ENCODE measurements at regions of chr7 and their contacts with region 1.

Region 1: GRCh38 chr7:17144322-17144721 is 154.1 kb upstream of the AHR start:
- DNase-seq: peak; percentile 87
- H3K4me3 Mint-ChIP-seq: peak overlapping the region; percentile 54
- H3K27ac Mint-ChIP-seq: peak overlapping the region; percentile 81
- H3K4me1 Mint-ChIP-seq: peaks cover 49% of the 10 kb centered on the region
- H3K27me3 Mint-ChIP-seq: peaks cover 2% of the 10 kb centered on the region

Region 2: GRCh38 chr7:16645593-16646471 is 498.5 kb before region 1 on chr7 and contains the starts of genes ANKMY2 and BZW2:
- intact Hi-C with region 1: loop called (anchors 10 kb)
- DNase-seq: peak; percentile 98
- H3K4me3 Mint-ChIP-seq: peak within 1 kb of the TSS; percentile 93
- H3K27ac Mint-ChIP-seq: peak within 1 kb of the TSS; percentile 99
- H3K4me1 Mint-ChIP-seq: peaks cover 54% of the 10 kb centered on the region
- H3K27me3 Mint-ChIP-seq: no peaks in the 10 kb centered on the region
- total RNA-seq, gene ANKMY2: 8.0 and 8.7 TPM in 2 replicates
- total RNA-seq, gene BZW2: 104 and 113 TPM in 2 replicates

Region 3: DNA sequence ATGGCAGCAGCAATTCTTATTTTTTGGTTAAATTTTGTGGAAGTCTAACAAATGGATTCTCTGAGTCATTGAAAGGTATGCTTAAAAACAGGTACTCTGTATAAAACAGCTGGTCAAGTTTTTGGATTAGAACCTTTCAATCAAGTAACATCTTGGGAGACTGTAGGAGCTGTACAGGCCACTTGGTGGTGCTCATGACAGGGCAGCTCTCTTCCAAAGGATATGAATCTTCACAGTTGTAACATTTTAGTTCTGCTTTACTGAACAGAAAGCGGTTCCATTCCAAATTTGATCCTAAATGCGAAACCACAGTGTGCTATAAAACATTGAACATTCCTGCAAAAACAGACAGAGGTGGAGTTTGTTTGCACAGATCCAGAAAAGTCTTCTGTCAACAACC is 218.0 kb before region 1 on chr7:
- intact Hi-C with region 1: loop called (anchors 5 kb)
- DNase-seq: peak; percentile 72
- H3K4me3 Mint-ChIP-seq: no peak overlapping the region
- H3K27ac Mint-ChIP-seq: peak overlapping the region; percentile 48
- H3K4me1 Mint-ChIP-seq: peaks cover 45% of the 10 kb centered on the region
- H3K27me3 Mint-ChIP-seq: no peaks in the 10 kb centered on the region

Region 4: DNA sequence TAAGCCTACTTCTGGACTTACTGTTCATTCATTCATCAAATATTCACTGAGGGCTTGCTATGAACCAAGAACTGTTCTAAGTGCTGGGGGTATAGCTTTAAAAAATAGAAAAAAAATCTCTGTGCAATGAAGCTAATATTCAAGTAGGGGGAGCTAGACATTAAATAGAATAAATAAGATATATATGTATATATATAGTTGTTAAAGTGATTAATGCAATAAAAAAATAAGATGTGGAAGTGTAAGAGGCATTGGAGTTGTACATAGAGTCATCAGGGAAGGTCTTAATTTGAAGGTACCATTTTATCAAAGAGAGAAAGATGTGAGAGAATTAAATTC is 81.3 kb before region 1 on chr7:
- intact Hi-C with region 1: loop called (anchors 5 kb)
- DNase-seq: no peak
- H3K4me3 Mint-ChIP-seq: no peak overlapping the region
- H3K27ac Mint-ChIP-seq: no peak overlapping the region
- H3K4me1 Mint-ChIP-seq: peaks cover 10% of the 10 kb centered on the region
- H3K27me3 Mint-ChIP-seq: no peaks in the 10 kb centered on the region

Region 5: GRCh38 chr7:17126413-17127268 is 17.7 kb before region 1 on chr7:
- intact Hi-C with region 1: loop called (anchors 2 kb)
- DNase-seq: no peak
- H3K4me3 Mint-ChIP-seq: no peak overlapping the region
- H3K27ac Mint-ChIP-seq: peak overlapping the region; percentile 48
- H3K4me1 Mint-ChIP-seq: peaks cover 21% of the 10 kb centered on the region
- H3K27me3 Mint-ChIP-seq: no peaks in the 10 kb centered on the region

Region 6: GRCh38 chr7:17159500-17160037 is 15.2 kb after region 1 on chr7:
- intact Hi-C with region 1: loop called (anchors 1 kb)
- DNase-seq: peak; percentile 66
- H3K4me3 Mint-ChIP-seq: peak overlapping the region; percentile 2
- H3K27ac Mint-ChIP-seq: peak overlapping the region; percentile 78
- H3K4me1 Mint-ChIP-seq: peaks cover 37% of the 10 kb centered on the region
- H3K27me3 Mint-ChIP-seq: peaks cover 13% of the 10 kb centered on the region

Region 7: GRCh38 chr7:17255926-17256325 is 111.6 kb after region 1 on chr7:
- intact Hi-C with region 1: loop called (anchors 1 kb)
- DNase-seq: no peak
- H3K4me3 Mint-ChIP-seq: no peak overlapping the region
- H3K27ac Mint-ChIP-seq: no peak overlapping the region
- H3K4me1 Mint-ChIP-seq: peaks cover 8% of the 10 kb centered on the region
- H3K27me3 Mint-ChIP-seq: no peaks in the 10 kb centered on the region

Region 8: DNA sequence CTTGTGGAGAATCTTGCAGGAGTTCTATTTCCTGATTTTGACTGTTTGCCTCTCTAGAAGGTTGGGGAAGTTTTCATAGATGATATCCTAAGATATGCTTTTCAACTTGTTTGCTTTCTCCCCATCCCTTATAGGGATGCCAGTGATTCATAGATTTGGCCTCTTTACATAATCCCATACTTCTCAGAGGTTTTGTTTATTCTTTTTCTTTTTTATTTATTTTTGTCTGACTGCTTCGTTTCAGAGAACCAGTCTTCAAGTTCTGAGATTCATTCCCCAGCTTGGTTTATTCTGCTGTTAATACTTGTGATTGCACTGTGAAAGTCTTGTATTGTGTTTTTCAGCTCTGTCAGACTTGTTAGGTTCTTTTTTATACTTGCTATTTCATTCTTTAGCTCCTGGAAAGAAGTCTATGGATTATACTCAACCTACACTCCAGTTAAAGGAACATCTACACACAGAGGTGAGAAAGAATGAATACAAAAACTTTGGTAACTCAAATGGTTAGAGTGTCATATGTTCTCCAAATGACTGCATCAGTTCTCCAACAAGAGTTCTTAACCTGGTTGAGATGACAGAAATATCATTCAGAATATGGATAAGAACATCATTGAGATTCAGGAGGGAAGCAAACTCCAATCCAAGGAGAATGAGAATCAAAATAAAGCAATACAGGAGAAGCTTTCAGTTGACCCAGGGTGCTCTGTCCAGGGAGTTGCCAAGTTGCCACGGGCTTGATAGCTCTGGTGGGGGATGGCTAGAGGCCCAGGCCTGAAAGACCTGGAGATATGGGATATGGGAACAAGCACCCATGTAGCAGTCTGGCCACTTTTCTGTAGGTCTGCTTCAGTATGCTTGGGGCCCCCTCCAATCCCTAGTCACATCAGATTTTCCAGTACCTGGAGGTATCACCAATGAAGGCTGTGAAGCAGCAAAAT is 304.4 kb after region 1 on chr7:
- intact Hi-C with region 1: no loop called
- DNase-seq: no peak
- H3K4me3 Mint-ChIP-seq: no peak overlapping the region
- H3K27ac Mint-ChIP-seq: no peak overlapping the region
- H3K4me1 Mint-ChIP-seq: no peaks in the 10 kb centered on the region
- H3K27me3 Mint-ChIP-seq: no peaks in the 10 kb centered on the region

Measured in activated CD4-positive, alpha-beta T cell treated with anti-CD3 and anti-CD28 coated beads, Interleukin-2, amount 10 ng/mL, durations not matched to agents 24 days and 14 days (primary cell).